Right cardiac atrium (tissue), 5 donors: ENCODE measurements at regions of chr7 and their contacts with region 1.

Region 1: GRCh38 chr7:87910138-87910537 is 23.9 kb upstream of the ADAM22 start:
- DNase-seq: no peak
- ATAC-seq: no peak
- H3K4me3 ChIP-seq: no peak overlapping the region
- H3K27ac ChIP-seq: no peak overlapping the region
- H3K4me1 ChIP-seq: no peaks in the 10 kb centered on the region
- H3K27me3 ChIP-seq: no peaks in the 10 kb centered on the region

Region 2: GRCh38 chr7:87960239-87960638 is 50.1 kb after region 1 on chr7:
- intact Hi-C with region 1: loop called in 1 of 4 experiments (anchors 10 kb)
- DNase-seq: no peak
- ATAC-seq: no peak
- H3K4me3 ChIP-seq: no peak overlapping the region
- H3K27ac ChIP-seq: no peak overlapping the region
- H3K4me1 ChIP-seq: no peaks in the 10 kb centered on the region
- H3K27me3 ChIP-seq: no peaks in the 10 kb centered on the region

Region 3: DNA sequence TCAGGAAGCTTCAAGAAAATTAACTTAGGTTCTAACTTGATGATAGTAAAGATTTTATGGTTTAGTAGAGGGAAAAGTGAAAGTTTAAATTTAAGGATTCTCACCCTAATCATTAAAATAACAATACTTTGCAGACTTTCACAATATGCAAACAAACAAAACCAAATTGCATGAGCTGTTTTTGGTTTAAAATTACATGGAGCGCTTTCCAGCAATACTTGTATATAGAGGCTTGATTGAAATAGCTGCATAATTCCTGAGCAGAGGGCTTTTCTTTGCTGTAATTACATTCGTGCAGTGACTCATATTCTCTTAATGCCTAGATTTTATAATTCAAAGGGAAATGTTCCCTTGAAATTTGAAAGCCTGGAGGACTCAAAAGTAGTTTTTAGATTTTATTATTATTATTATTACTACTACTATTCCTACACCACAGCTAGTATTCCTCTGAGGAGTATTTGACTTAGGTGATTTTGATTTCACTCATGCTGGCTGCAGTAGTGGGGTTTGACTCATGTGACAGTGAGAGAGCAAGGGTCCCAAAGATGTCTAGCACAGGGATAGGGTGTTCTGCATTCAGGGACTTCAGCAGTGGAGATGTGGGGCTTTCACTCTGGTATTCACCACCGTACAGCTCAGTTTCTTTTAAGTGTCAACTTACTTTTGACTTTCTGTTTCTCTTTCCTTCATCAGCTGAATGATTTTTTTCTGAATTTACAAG is 162.0 kb after region 1 on chr7:
- intact Hi-C with region 1: no loop called
- DNase-seq: no peak
- ATAC-seq: no peak
- H3K4me3 ChIP-seq: no peak overlapping the region
- H3K27ac ChIP-seq: no peak overlapping the region
- H3K4me1 ChIP-seq: no peaks in the 10 kb centered on the region
- H3K27me3 ChIP-seq: no peaks in the 10 kb centered on the region